ENCODE measurements at regions of chr17 and their contacts with region 1.

Region 1: DNA sequence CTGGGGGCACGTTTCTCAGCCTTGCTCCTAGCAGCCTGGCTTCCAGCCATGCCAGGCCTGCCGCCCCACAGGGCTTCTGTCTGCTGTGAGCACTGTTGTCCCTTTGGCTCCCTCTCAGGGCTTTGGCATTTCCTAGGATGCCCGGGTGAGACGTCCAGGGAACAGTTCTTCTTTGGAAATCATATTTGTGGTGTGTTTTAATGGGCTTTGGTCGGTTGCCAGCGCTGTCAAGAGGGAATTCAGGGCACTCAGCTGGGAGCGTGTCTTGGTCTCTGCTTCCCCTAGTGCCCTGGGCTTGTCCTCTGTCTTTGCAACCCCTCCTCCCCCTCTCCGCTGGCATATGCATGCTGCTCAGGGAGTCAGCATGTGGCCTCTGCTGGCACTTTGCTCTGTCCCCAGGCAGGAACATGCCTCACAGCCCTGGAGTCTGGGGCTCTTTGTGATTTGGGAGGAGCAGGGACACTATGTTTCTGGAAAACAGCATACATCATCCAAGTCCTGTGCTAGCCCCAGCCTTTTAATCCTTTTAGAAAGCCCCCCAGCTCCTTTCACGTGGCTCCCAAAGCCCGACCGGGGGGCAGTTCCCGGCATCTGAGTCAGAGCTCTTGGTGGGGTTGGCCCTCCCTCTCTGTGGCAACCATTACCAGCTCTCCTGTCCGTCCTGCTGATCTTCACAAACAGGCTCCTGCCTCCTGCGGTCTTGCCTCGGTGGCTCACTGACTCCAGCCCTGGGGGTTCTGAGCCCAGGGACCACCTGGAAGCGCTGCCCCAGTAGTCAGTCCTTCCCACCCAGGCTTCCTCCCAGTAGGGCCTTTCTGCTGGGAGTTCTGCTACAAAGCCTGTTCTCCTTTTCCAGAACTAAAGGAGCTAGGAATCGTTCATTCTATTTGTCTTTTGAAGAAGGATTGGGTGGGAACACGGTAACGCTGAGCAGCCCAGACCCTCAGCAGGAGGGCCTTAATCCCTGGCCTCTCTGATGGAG is 26.7 kb downstream of the SAP30BP start:
- DNase-seq: peak; percentile 93 to 94
- ATAC-seq: peak; percentile 70 to 81
- H3K4me3 ChIP-seq: no peak overlapping the region
- H3K27ac ChIP-seq: peak overlapping the region; percentile 91 to 95 (median 93)
- H3K4me1 ChIP-seq: peaks cover 75 to 76% of the 10 kb centered on the region in 2 donors
- H3K27me3 ChIP-seq: no peaks in the 10 kb centered on the region
- CTCF ChIP-seq: peak in 1 of 5 experiments; percentile 17
- POLR2A ChIP-seq: peak; percentile 41 to 49

Region 2: DNA sequence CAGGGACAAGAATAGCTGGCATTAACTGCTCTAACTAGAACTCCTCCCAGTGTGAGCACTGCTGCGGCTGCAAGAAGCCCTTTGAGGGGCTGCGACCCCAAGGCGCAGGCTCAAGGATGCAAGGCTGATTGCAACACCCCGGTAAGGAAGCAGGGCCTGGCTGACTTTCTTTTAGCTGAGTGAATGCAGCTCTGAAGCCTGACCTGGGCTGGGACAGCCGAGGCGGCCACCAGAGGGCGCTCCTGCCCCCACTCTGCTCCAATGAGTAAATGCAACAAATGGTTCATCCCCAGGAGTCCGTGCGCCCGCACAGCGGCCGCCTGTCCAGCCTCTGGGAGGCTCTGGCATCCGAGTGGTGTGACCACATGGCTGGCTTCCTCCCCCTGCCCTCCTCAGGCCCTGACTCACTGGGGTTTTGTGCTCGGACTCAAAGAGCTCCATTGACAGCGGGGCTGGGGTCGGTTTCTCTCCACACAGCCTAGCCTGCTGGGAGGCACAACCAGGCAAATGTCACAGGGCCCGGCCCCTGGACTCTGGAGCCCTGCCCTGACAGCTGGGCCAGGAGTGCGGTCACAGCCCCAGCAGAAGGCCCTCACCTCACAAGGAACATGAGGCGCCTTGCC is 60.8 kb before region 1 on chr17 and contains the start of gene SMIM5:
- in situ Hi-C with region 1: no loop called
- intact Hi-C with region 1: loop called (anchors 10 kb)
- DNase-seq: peak; percentile 63 to 81
- ATAC-seq: peak; percentile 72 to 75
- H3K4me3 ChIP-seq: peak within 1 kb of the TSS in 3 of 4 donors; percentile 4 to 35 (median 12)
- H3K27ac ChIP-seq: peak within 1 kb of the TSS; percentile 70 to 84 (median 76)
- H3K4me1 ChIP-seq: peaks cover 38 to 39% of the 10 kb centered on the region in 2 donors
- H3K27me3 ChIP-seq: no peaks in the 10 kb centered on the region
- CTCF ChIP-seq: peak; percentile 90 to 98 (median 96)
- POLR2A ChIP-seq: peak in 1 of 2 donors; percentile 8
- total RNA-seq, gene SMIM5: 0.22 TPM in 1 of 4 donors, not detected in the others

Region 3: DNA sequence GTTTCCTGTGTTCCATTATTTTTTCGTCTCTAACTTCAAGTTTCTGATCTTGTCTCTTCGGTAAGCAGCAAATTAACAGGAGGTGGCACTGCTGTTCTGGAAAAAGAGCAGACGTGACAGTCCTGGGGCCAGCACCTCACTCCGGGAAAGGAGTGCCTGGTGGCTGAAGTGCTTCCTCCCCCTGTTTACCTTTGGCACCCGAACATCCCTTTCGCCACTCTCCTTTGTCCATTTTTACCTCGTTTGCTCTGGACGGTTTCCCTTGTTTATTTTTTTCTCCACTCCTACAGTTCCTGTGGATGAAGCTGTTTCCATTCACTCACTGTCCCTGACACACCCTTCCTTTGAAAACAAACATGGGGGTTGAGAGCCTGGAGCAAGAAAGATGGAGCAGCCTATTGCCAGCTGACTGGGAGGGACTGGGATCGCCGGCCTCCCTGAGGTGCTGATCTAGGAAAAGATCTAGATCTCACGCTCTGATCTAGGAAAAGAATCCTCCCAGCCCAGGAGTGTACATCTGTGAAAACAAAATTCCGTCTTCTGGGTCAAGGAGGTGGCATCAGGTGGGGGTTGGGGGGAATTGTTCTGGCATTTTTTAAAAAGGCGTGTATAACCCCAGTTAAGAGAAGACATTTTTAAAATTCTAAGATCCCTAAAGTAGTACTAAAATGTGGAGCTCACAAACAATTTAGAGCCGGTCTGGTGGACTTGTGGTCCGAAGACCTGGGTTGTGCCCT is 13.9 kb before region 1 on chr17:
- in situ Hi-C with region 1: no loop called
- intact Hi-C with region 1: loop called (anchors 2 kb)
- DNase-seq: no peak
- ATAC-seq: peak in 1 of 2 donors; percentile 45
- H3K4me3 ChIP-seq: no peak overlapping the region
- H3K27ac ChIP-seq: peak overlapping the region in 3 of 4 donors; percentile 25 to 67 (median 33)
- H3K4me1 ChIP-seq: peaks cover 13 to 17% of the 10 kb centered on the region in 2 donors
- H3K27me3 ChIP-seq: no peaks in the 10 kb centered on the region
- CTCF ChIP-seq: peak in 2 of 5 experiments; percentile 31 to 47
- POLR2A ChIP-seq: no peak

Region 4: GRCh38 chr17:75753514-75754377 is 60.0 kb after region 1 on chr17:
- in situ Hi-C with region 1: no loop called
- intact Hi-C with region 1: no loop called
- DNase-seq: peak in 1 of 2 donors; percentile 48
- ATAC-seq: peak; percentile 64 to 76
- H3K4me3 ChIP-seq: peak overlapping the region; percentile 56 to 71 (median 57)
- H3K27ac ChIP-seq: peak overlapping the region in 1 of 4 donors; percentile 12
- H3K4me1 ChIP-seq: peaks cover 13 to 15% of the 10 kb centered on the region in 2 donors
- H3K27me3 ChIP-seq: no peaks in the 10 kb centered on the region
- CTCF ChIP-seq: peak; percentile 22 to 72 (median 55)
- POLR2A ChIP-seq: no peak

Region 5: DNA sequence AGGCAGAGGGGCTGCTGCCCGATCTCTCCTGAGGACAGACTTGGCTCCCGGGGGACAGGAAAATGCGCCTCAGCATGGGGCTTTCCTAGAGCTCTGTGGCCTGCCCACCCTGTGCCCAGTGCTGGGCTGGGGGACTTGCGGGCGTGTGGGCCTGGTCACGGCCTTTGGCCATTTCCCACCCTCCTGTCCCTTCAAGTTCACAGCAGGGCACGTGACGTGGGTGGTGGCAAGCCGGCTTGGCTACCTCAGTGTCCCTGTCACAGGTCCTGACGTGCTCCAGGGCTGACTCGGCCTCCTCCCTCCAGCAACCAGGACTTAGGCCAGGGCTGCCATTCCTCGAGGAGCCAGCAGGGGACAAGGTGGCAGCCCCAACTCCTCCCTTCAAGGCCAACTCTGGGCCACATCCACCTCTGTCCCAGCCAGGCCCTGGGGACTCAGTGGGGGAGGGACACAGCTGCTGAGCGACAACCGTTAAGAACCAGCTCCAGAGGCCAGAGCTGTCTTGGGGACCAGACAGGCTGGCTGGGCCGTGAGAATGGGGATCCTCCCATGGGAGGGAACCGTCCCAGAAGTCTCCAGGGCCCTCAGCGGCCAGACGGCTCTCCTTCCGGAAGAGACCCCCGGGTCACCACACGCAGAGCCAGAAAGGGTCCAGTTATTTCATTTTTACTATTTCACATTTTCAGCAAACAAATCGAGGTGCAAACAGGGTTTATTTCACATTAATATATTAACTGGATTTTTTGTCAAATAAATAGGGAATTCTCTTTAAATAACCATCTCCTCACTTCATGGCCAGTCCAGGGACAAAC is 151.5 kb after region 1 on chr17:
- in situ Hi-C with region 1: no loop called
- intact Hi-C with region 1: loop called (anchors 2 kb)
- DNase-seq: peak; percentile 94 to 98
- ATAC-seq: peak; percentile 82 to 88
- H3K4me3 ChIP-seq: peak overlapping the region in 1 of 4 donors; percentile 8
- H3K27ac ChIP-seq: peak overlapping the region; percentile 95 to 99 (median 95)
- H3K4me1 ChIP-seq: peaks cover 49 to 50% of the 10 kb centered on the region in 2 donors
- H3K27me3 ChIP-seq: no peaks in the 10 kb centered on the region
- CTCF ChIP-seq: peak; percentile 91 to 98 (median 95)
- POLR2A ChIP-seq: peak; percentile 45 to 50

Measured in gastrocnemius medialis (tissue), 4 donors.